CD4-positive, alpha-beta T cell (primary cell): ENCODE measurements at regions of chr17 and their contacts with region 1.

Region 1: GRCh38 chr17:12472252-12473173 is 193.2 kb upstream of the MYOCD start:
- DNase-seq: no peak
- ATAC-seq: no peak
- H3K4me3 ChIP-seq: no peak overlapping the region
- H3K4me3 Mint-ChIP-seq: no peak overlapping the region
- H3K27ac ChIP-seq: no peak overlapping the region
- H3K27ac Mint-ChIP-seq: no peak overlapping the region
- H3K4me1 ChIP-seq: no peaks in the 10 kb centered on the region
- H3K4me1 Mint-ChIP-seq: no peaks in the 10 kb centered on the region
- H3K27me3 ChIP-seq: no peaks in the 10 kb centered on the region
- H3K27me3 Mint-ChIP-seq: no peaks in the 10 kb centered on the region
- CTCF ChIP-seq: no peak

Region 2: DNA sequence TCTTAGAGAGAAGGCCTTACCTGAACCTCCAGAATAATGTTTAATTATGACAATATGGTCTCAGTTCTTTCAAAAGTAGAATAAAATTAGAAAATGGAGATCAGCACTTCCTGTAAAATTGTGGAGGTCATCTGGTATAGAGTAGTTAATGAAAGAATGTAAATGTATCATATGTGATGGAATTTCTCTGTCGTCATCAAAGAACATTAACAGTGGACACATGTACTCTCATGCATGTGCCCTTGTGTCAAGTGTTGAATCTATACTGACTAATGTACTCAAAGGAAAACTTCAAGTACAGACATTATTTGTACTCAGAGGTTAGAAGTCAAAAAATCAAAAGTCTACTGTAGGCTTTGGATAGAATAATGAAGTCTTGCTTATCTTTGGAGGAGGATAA is 64.0 kb after region 1 on chr17:
- CTCF ChIA-PET with region 1: no interaction called
- POLR2A ChIA-PET with region 1: no interaction called
- intact Hi-C with region 1: loop called in 1 of 2 experiments (anchors 10 kb)
- DNase-seq: no peak
- ATAC-seq: no peak
- H3K4me3 ChIP-seq: no peak overlapping the region
- H3K4me3 Mint-ChIP-seq: no peak overlapping the region
- H3K27ac ChIP-seq: no peak overlapping the region
- H3K27ac Mint-ChIP-seq: no peak overlapping the region
- H3K4me1 ChIP-seq: no peaks in the 10 kb centered on the region
- H3K4me1 Mint-ChIP-seq: no peaks in the 10 kb centered on the region
- H3K27me3 ChIP-seq: no peaks in the 10 kb centered on the region
- H3K27me3 Mint-ChIP-seq: no peaks in the 10 kb centered on the region
- CTCF ChIP-seq: no peak

Region 3: DNA sequence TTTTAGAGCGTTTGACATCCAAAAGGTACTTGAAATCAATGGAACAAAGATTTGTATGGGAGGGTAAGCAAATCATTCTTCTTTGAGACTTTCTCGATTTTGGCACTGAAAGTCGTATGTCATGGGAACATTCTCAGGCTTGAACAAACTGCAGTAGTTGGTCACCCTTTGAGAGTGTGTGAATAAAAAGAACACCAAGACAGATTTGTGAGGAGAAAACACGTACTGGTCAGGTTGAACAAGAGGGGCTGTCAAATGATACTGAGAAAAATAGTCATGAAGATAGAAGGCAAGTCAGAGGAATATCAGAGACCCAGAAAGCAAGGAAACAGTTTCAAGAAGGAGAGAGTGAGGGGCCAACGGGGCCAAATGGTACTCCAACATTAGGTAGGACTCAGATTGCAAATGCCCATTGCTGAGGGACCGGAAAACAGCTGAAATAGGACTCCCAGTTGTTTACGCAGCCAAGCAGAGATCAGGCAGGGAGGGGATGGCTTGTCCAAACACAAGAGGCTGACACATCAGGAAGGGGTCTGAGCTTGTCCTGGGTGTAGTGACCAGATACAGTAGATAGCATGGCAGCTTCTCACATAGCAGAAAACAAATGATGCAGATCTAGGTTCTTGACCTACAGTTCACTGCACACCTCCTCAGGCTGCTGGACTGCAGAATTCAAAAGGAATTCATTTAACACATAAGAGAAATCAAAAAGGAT is 118.7 kb after region 1 on chr17:
- CTCF ChIA-PET with region 1: no interaction called
- POLR2A ChIA-PET with region 1: no interaction called
- intact Hi-C with region 1: no loop called
- DNase-seq: no peak
- ATAC-seq: no peak
- H3K4me3 ChIP-seq: no peak overlapping the region
- H3K4me3 Mint-ChIP-seq: no peak overlapping the region
- H3K27ac ChIP-seq: no peak overlapping the region
- H3K27ac Mint-ChIP-seq: no peak overlapping the region
- H3K4me1 ChIP-seq: no peaks in the 10 kb centered on the region
- H3K4me1 Mint-ChIP-seq: no peaks in the 10 kb centered on the region
- H3K27me3 ChIP-seq: no peaks in the 10 kb centered on the region
- H3K27me3 Mint-ChIP-seq: no peaks in the 10 kb centered on the region
- CTCF ChIP-seq: no peak

Region 4: DNA sequence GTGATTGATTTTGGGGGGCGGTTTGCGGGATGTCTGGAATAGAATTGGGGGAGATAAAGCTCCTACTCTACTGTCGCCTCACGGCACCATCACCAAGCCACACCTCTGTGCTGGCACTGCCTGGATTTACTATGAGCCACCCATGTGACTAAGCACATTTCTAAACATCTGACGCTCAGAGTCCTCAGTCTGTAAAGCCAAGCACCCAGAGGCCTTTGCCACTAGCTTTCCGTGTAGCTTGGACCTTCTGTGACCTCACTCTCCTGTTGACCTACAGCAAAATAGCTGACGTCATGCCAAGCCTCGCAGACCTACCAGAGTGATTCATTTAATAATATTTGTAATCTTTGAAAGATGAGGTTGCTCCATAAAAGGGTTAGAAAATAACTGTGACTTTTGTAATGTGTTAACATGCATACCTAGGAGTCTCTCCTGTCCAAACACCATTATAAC is 154.7 kb after region 1 on chr17:
- CTCF ChIA-PET with region 1: no interaction called
- POLR2A ChIA-PET with region 1: no interaction called
- intact Hi-C with region 1: no loop called
- DNase-seq: no peak
- ATAC-seq: no peak
- H3K4me3 ChIP-seq: no peak overlapping the region
- H3K4me3 Mint-ChIP-seq: no peak overlapping the region
- H3K27ac ChIP-seq: no peak overlapping the region
- H3K27ac Mint-ChIP-seq: no peak overlapping the region
- H3K4me1 ChIP-seq: no peaks in the 10 kb centered on the region
- H3K4me1 Mint-ChIP-seq: no peaks in the 10 kb centered on the region
- H3K27me3 ChIP-seq: no peaks in the 10 kb centered on the region
- H3K27me3 Mint-ChIP-seq: no peaks in the 10 kb centered on the region
- CTCF ChIP-seq: no peak